Calu3 (cell line): ENCODE measurements at regions of chr1 and their contacts with region 1.

Region 1: DNA sequence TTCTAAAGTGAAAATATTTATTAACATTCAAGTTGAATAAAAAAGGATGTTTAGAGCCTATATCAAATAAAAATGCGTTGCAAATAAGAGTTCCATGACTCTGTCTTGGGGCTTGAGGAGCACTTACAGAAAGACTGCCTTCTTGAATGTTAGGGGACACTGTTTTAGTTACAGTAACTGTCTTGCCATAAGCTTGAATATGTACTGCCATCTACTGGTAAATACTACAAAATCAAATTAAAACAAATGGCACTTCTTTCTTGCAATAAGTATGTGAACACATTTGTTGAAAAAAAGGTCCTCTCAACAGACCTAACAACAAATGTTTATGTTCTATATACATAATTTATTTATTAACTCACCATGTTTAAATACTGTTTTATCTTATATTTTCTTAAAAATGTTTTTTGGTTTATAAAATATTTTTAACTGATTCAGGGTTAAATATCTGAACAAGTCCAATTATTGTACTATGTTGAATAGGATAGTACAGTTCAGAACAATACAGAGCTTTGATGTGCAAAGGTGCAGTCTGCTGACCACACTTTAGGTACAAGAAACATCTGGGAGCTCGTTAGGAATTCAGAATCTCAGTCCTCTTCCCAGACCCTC is 199.5 kb downstream of the LRRIQ3 start:
- DNase-seq: no peak
- H3K4me3 Mint-ChIP-seq: no peak overlapping the region
- H3K27ac Mint-ChIP-seq: peak overlapping the region; percentile 8
- H3K4me1 Mint-ChIP-seq: peaks cover 13% of the 10 kb centered on the region
- H3K27me3 Mint-ChIP-seq: no peaks in the 10 kb centered on the region
- CTCF ChIP-seq: peak; percentile 33

Region 2: GRCh38 chr1:73839922-73840321 is 158.5 kb before region 1 on chr1:
- CTCF ChIA-PET with region 1: interaction called, 15 read pairs
- intact Hi-C with region 1: loop called (anchors 1 kb)
- DNase-seq: peak; percentile 62
- H3K4me3 Mint-ChIP-seq: no peak overlapping the region
- H3K27ac Mint-ChIP-seq: no peak overlapping the region
- H3K4me1 Mint-ChIP-seq: no peaks in the 10 kb centered on the region
- H3K27me3 Mint-ChIP-seq: no peaks in the 10 kb centered on the region
- CTCF ChIP-seq: peak; percentile 60

Region 3: GRCh38 chr1:73909043-73909562 is 89.4 kb before region 1 on chr1:
- CTCF ChIA-PET with region 1: no interaction called
- intact Hi-C with region 1: loop called (anchors 5 kb)
- DNase-seq: no peak
- H3K4me3 Mint-ChIP-seq: no peak overlapping the region
- H3K27ac Mint-ChIP-seq: no peak overlapping the region
- H3K4me1 Mint-ChIP-seq: peaks cover 24% of the 10 kb centered on the region
- H3K27me3 Mint-ChIP-seq: no peaks in the 10 kb centered on the region
- CTCF ChIP-seq: no peak

Region 4: DNA sequence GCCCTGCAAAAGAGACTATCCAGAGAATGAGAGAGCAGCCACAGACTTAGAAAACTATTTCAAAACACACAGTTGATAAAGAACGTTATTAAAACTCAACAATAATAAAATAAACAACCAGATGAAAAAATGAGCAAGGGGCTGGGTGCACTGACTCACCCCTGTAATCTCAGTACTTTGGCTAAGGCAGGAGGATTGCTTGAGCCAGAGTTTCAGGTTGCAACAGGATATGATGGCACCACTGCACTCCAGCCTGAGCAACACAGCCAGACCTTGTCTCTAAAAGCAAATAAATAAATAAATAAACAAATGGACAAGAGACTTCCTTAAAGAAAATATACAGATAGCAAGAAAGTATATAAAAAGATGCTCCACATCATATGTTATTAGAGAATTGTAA is 55.0 kb after region 1 on chr1:
- CTCF ChIA-PET with region 1: no interaction called
- intact Hi-C with region 1: no loop called
- DNase-seq: no peak
- H3K4me3 Mint-ChIP-seq: no peak overlapping the region
- H3K27ac Mint-ChIP-seq: no peak overlapping the region
- H3K4me1 Mint-ChIP-seq: no peaks in the 10 kb centered on the region
- H3K27me3 Mint-ChIP-seq: no peaks in the 10 kb centered on the region
- CTCF ChIP-seq: no peak

Region 5: GRCh38 chr1:74517599-74518051 is 519.2 kb after region 1 on chr1:
- CTCF ChIA-PET with region 1: no interaction called
- intact Hi-C with region 1: no loop called
- DNase-seq: no peak
- H3K4me3 Mint-ChIP-seq: no peak overlapping the region
- H3K27ac Mint-ChIP-seq: no peak overlapping the region
- H3K4me1 Mint-ChIP-seq: no peaks in the 10 kb centered on the region
- H3K27me3 Mint-ChIP-seq: no peaks in the 10 kb centered on the region
- CTCF ChIP-seq: no peak